Endothelial cell of umbilical vein (primary cell): ENCODE measurements at regions of chr22 and their contacts with region 1.

Region 1: GRCh38 chr22:30920407-30920806 is 48.2 kb downstream of the MORC2 start:
- DNase-seq: peak; percentile 62
- H3K4me3 ChIP-seq: no peak overlapping the region
- H3K27ac ChIP-seq: no peak overlapping the region
- H3K4me1 ChIP-seq: peaks cover 13% of the 10 kb centered on the region
- H3K27me3 ChIP-seq: no peaks in the 10 kb centered on the region
- CTCF ChIP-seq: peak; percentile 87 to 88
- POLR2A ChIP-seq: no peak

Region 2: GRCh38 chr22:30591588-30592359 is 328.6 kb before region 1 on chr22 and contains the start of gene PES1:
- CTCF ChIA-PET with region 1: no interaction called
- POLR2A ChIA-PET with region 1: no interaction called
- dilution Hi-C with region 1: no loop called
- intact Hi-C with region 1: loop called (anchors 5 kb)
- DNase-seq: peak; percentile 99
- H3K4me3 ChIP-seq: peak within 1 kb of the TSS; percentile 68 to 93 (median 72)
- H3K27ac ChIP-seq: peak within 1 kb of the TSS; percentile 95
- H3K4me1 ChIP-seq: peaks cover 10% of the 10 kb centered on the region
- H3K27me3 ChIP-seq: no peaks in the 10 kb centered on the region
- CTCF ChIP-seq: no peak
- POLR2A ChIP-seq: no peak
- total RNA-seq, gene PES1: 106 and 110 TPM in 2 replicates

Region 3: GRCh38 chr22:30763815-30764686 is 156.4 kb before region 1 on chr22:
- CTCF ChIA-PET with region 1: interaction called, 231 read pairs
- POLR2A ChIA-PET with region 1: interaction called, 3 read pairs
- dilution Hi-C with region 1: no loop called
- intact Hi-C with region 1: loop called (anchors 1 kb)
- DNase-seq: peak; percentile 77
- H3K4me3 ChIP-seq: no peak overlapping the region
- H3K27ac ChIP-seq: no peak overlapping the region
- H3K4me1 ChIP-seq: no peaks in the 10 kb centered on the region
- H3K27me3 ChIP-seq: no peaks in the 10 kb centered on the region
- CTCF ChIP-seq: peak; percentile 67 to 71
- POLR2A ChIP-seq: no peak

Region 4: DNA sequence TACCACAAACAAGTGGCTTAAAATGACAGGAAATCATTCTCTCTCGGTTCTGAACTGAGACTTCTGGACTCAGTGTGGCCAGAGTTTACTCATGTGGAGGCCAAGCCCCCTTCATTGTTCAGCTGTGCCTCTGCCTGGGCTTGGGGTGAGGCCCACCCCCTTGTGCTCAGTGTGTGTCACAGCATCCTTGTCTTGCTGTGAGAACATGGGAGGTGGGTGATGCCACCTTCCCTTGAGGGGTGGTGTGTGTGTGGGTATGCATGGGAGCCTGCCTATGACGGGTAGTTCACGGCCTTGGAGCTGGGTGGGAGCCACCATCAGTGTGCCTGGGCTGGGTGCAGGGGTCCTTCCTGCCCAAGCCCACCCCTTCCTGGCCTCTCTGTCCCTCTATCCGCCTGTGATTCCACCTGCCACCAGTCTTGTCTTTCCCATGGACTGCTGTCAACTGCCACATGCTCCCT is 53.6 kb before region 1 on chr22:
- CTCF ChIA-PET with region 1: no interaction called
- POLR2A ChIA-PET with region 1: no interaction called
- dilution Hi-C with region 1: no loop called
- intact Hi-C with region 1: loop called (anchors 2 kb)
- DNase-seq: peak; percentile 80
- H3K4me3 ChIP-seq: no peak overlapping the region
- H3K27ac ChIP-seq: peak overlapping the region; percentile 19
- H3K4me1 ChIP-seq: peaks cover 14% of the 10 kb centered on the region
- H3K27me3 ChIP-seq: no peaks in the 10 kb centered on the region
- CTCF ChIP-seq: peak; percentile 37 to 44
- POLR2A ChIP-seq: no peak

Region 5: GRCh38 chr22:30908051-30908461 is 12.4 kb before region 1 on chr22:
- CTCF ChIA-PET with region 1: interaction called, 37 read pairs
- POLR2A ChIA-PET with region 1: no interaction called
- dilution Hi-C with region 1: no loop called
- intact Hi-C with region 1: no loop called
- DNase-seq: no peak
- H3K4me3 ChIP-seq: no peak overlapping the region
- H3K27ac ChIP-seq: no peak overlapping the region
- H3K4me1 ChIP-seq: no peaks in the 10 kb centered on the region
- H3K27me3 ChIP-seq: no peaks in the 10 kb centered on the region
- CTCF ChIP-seq: no peak
- POLR2A ChIP-seq: no peak

Region 6: DNA sequence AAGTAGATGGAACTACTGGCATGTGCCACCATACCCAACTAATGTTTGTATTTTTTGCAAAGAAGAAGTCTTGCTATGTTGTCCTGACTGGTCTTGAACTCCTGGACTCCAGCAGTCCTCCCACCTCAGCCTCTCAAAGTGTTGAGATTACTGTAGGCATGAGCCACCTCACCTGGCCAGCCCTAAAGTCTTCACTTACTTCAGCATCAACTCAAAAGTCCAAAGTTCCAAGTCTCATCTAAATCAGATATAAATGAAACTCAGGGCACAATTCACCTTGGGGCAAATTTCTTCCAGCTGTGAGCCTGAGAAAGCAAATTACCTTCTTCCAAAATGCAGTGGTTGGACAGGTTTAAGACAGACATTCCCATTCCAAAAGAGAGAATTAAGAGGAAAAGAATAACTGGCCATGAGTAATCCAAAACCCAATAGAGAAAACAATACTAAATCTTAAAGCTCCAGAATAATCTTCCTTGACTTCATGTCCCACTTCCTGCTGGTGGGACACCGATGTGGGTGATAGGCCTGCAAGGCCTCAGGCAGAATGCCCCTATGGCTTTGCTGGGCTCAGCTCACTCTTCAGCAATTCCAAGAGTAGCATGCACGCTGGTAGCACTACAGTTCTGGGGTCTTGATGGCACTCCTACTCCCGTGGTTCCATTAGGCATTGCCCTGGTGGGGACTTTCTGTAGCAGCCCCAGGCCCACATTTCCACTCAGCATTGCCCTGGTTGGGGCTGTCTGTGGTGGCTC is 99.0 kb after region 1 on chr22:
- CTCF ChIA-PET with region 1: no interaction called
- POLR2A ChIA-PET with region 1: no interaction called
- dilution Hi-C with region 1: no loop called
- intact Hi-C with region 1: no loop called
- DNase-seq: no peak
- H3K4me3 ChIP-seq: no peak overlapping the region
- H3K27ac ChIP-seq: no peak overlapping the region
- H3K4me1 ChIP-seq: no peaks in the 10 kb centered on the region
- H3K27me3 ChIP-seq: peaks cover 5 to 10% of the 10 kb centered on the region in 2 experiments
- CTCF ChIP-seq: no peak
- POLR2A ChIP-seq: no peak

Region 7: DNA sequence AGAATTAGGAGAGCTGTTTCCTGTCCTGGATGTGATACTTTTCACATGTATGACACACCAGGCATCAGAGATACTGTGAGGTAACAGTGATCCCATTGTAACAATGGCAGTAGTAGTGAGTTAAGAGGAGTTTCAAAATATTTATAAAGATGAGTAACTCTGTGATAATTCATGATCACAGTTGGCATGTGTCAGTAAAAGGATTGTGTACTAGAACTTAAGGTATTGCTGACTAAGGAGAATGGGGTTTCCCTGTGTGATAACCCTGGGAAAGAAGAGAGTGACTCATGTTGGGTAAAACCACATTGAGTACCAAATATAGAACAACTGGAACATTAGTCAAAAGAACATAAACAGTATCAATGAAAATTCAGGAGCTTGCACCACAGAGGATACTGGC is 1099.7 kb after region 1 on chr22:
- CTCF ChIA-PET with region 1: no interaction called
- POLR2A ChIA-PET with region 1: no interaction called
- dilution Hi-C with region 1: no loop called
- intact Hi-C with region 1: no loop called
- DNase-seq: peak; percentile 16
- H3K4me3 ChIP-seq: no peak overlapping the region
- H3K27ac ChIP-seq: no peak overlapping the region
- H3K4me1 ChIP-seq: peaks cover 5% of the 10 kb centered on the region
- H3K27me3 ChIP-seq: peaks cover 0 to 3% of the 10 kb centered on the region in 2 experiments
- CTCF ChIP-seq: no peak
- POLR2A ChIP-seq: no peak